ENCODE measurements at regions of chr3 and their contacts with region 1.

Region 1: GRCh38 chr3:153704115-153704514 is 417.1 kb upstream of the ARHGEF26 start:
- DNase-seq: no peak
- H3K4me3 ChIP-seq: no peak overlapping the region
- H3K27ac ChIP-seq: no peak overlapping the region
- H3K4me1 ChIP-seq: no peaks in the 10 kb centered on the region
- H3K27me3 ChIP-seq: no peaks in the 10 kb centered on the region
- CTCF ChIP-seq: no peak

Region 2: DNA sequence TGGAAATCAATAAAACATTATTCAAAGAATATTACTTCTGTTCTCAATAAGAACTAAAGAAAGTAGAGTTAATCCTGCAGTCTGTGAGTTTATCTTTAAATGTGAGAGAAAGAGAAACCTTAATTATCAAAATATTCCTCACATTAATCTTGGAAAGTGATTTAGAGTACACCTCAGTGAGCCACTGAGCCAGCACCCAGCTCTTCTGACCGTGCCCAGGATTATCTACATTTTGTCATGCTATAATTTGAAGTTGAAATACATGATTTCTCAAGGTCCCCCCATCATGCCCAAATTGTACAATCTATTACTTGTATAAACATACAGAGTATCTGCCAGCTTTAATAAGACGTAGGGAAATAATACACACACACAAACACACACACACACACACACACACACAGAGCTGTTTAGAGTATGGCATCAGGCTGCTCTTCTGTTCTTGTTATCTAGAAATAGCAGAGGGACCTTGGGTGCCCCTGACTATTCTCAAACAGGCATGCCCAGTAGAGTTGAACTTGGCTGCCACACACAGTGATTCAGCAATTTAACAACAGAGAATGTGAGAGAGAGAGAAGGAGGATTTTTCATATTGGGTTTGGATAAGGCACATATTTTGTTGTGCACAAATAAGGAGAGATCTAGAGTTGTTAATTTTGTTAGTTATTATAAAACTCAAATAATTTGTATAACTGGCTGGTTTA is 794.8 kb before region 1 on chr3:
- CTCF ChIA-PET with region 1: no interaction called
- POLR2A ChIA-PET with region 1: no interaction called
- intact Hi-C with region 1: no loop called
- DNase-seq: no peak
- H3K4me3 ChIP-seq: no peak overlapping the region
- H3K27ac ChIP-seq: 0 out of 2 replicates have a peak overlapping the region, but pooled peaks have one; percentile 5
- H3K4me1 ChIP-seq: peaks cover 12% of the 10 kb centered on the region; the same call in 1 of the 2 replicates
- H3K27me3 ChIP-seq: no peaks in the 10 kb centered on the region
- CTCF ChIP-seq: no peak

Region 3: GRCh38 chr3:153172796-153173757 is 531.0 kb before region 1 on chr3:
- CTCF ChIA-PET with region 1: no interaction called
- POLR2A ChIA-PET with region 1: interaction called, 10 read pairs
- intact Hi-C with region 1: no loop called
- DNase-seq: peak in 1 of 2 experiments; percentile 21
- H3K4me3 ChIP-seq: no peak overlapping the region
- H3K27ac ChIP-seq: no peak overlapping the region
- H3K4me1 ChIP-seq: peaks cover 5% of the 10 kb centered on the region; the same call in 1 of the 2 replicates
- H3K27me3 ChIP-seq: no peaks in the 10 kb centered on the region
- CTCF ChIP-seq: no peak

Measured in PC-9 (cell line).